ENCODE measurements at regions of chr6 and their contacts with region 1.

Region 1: DNA sequence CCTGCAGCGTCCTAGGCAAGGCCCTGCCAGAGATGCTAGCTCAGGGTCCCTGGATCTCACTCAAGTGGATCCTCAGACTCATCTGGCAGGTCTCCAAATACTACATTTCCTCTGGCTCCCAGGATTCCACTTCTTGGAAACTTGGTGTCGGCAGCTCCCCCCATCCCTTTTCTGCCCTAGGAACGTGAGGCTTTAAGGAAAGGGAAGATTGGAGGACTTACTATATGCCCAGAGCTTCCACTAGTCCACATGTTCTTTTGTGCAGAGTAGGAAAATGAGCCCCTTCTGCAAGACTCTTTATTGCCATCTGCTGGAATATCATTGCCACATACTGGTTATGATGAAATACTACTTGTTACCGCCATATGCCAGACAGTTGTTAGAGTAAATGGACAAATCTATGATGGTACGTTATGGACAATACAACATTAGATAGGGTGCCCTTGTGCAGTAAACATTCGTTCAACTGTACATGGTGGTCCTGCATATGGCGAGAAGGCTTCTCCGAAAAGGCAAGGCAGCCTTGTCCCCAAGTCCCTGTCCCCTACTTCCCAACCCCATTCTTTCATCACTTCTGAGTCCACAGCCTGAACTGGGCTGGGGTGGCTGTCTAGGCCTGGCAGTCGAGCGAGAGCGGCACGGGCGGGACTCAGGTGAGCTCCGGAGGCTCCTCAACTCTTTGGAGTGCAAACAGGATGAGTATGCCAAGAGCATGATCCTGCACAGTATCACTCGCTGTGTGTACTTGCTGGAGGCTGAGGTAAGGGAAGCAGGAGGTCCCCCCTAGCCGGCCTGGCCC is 780 bp downstream of the ARMC12 start:
- DNase-seq: peak in 2 of 10 donors; percentile 37 to 66

Region 2: GRCh38 chr6:35359751-35360348 is 377.8 kb before region 1 on chr6:
- intact Hi-C with region 1: loop called (anchors 10 kb)
- DNase-seq: peak in 7 of 10 donors; percentile 38 to 89 (median 57)

Region 3: GRCh38 chr6:35522660-35523658 is 214.7 kb before region 1 on chr6:
- intact Hi-C with region 1: loop called (anchors 1 kb)
- DNase-seq: peak; percentile 42 to 94 (median 71)

Region 4: GRCh38 chr6:35583893-35584688 is 153.5 kb before region 1 on chr6:
- intact Hi-C with region 1: loop called (anchors 1 kb)
- DNase-seq: peak in 6 of 10 donors; percentile 58 to 91 (median 70)